ENCODE measurements at regions of chr19 and their contacts with region 1.

Region 1: DNA sequence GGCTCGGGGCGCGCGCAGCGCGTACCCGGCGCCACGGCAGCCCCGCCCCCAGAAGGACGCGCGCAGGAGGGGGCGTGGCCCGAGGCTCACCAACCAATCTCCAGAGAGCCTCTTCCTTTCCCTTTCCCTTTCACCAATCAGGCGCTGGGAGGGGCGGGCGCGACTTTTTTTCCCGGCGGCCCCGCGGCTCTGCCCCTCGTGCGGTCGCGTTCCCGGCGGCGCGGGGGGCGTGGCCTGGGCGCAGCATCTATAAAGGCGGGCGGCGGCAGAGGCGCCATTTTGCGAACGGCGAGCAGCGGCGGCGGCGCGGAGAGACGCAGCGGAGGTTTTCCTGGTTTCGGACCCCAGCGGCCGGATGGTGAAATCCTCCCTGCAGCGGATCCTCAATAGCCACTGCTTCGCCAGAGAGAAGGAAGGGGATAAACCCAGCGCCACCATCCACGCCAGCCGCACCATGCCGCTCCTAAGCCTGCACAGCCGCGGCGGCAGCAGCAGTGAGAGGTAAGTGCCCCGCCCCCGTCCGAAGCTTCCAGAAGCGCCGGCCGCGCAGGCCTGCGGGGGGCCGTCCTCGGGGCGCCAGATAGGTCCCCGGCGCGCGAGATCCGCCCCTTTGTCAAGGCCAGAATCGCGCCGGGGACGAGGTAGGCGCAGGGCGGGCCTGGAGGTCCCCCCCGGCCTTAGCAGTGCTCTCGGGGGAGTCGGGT is 12.6 kb downstream of the PEAK3 start:
- DNase-seq: peak; percentile 75 to 100
- H3K4me3 ChIP-seq: peak overlapping the region; percentile 87 to 100 (median 94)
- H3K27ac ChIP-seq: peak overlapping the region; percentile 76
- H3K4me1 ChIP-seq: peaks cover 0 to 20% (median 7%) of the 10 kb centered on the region in 4 experiments; a peak in 5 of 7 replicates
- H3K27me3 ChIP-seq: no peaks in the 10 kb centered on the region
- CTCF ChIP-seq: no peak
- EP300 ChIP-seq: no peak
- POLR2A ChIP-seq: peak; percentile 99
- RAD21 ChIP-seq: no peak

Region 2: DNA sequence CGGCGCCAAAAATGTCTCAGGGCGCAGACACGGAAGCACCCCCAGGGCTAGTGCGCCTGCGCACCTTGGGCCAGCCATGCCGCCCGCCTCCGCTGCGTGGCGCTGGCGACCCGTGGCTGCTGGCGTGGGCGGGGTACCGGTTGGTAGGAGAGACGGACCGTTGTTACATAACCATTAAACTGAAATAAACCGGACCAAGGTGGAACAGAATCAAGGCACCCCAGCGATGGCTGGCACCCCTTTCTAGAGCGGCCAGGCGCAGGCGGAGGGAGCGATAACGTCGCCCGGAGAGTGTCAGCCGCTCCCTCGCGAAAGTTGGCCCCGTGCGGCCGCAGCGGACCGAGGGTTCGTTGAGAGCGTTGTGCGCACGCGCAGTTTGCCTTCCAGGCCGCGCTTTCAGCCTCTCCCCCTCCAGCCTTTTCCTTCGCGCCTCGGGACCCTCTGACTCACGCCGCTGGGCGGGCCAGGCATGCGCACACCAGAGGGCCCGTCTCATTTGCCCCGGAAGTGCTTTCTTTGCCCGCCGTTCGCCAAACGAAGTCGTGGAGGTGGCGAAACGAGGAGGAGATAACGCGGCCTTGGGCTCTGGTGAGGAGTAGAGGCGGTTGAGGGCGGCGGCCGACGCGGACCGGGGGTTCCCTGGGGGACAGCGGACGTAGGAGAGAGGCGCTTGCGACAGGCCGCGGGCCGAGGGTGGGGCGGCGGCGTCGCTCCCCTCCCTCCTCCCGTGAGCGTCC is 32.9 kb before region 1 on chr19 and contains the starts of genes PLEKHJ1 and SF3A2:
- CTCF ChIA-PET with region 1: interaction called, 18 read pairs
- POLR2A ChIA-PET with region 1: interaction called, 206 read pairs
- DNase-seq: peak; percentile 87 to 99
- H3K4me3 ChIP-seq: peak within 1 kb of the TSS; percentile 77 to 86 (median 80)
- H3K27ac ChIP-seq: peak within 1 kb of the TSS; percentile 93
- H3K4me1 ChIP-seq: peaks cover 0 to 24% (median 14%) of the 10 kb centered on the region in 4 experiments; a peak in 6 of 7 replicates
- H3K27me3 ChIP-seq: no peaks in the 10 kb centered on the region
- CTCF ChIP-seq: peak; percentile 93 to 100 (median 97)
- EP300 ChIP-seq: no peak
- POLR2A ChIP-seq: peak; percentile 77 to 90
- RAD21 ChIP-seq: peak; percentile 86 to 91
- total RNA-seq, gene PLEKHJ1: 135 TPM in 2 replicates
- total RNA-seq, gene SF3A2: 142 and 146 TPM in 2 replicates

Region 3: GRCh38 chr19:2280633-2281264 is 11.4 kb after region 1 on chr19:
- CTCF ChIA-PET with region 1: interaction called, 46 read pairs
- POLR2A ChIA-PET with region 1: interaction called, 14 read pairs
- DNase-seq: no peak
- H3K4me3 ChIP-seq: no peak overlapping the region
- H3K27ac ChIP-seq: no peak overlapping the region
- H3K4me1 ChIP-seq: peaks cover 0 to 5% (median 0%) of the 10 kb centered on the region in 4 experiments; a peak in 2 of 7 replicates
- H3K27me3 ChIP-seq: peaks cover 0 to 17% (median 14%) of the 10 kb centered on the region in 4 experiments; a peak in 6 of 7 replicates
- CTCF ChIP-seq: no peak
- EP300 ChIP-seq: no peak
- POLR2A ChIP-seq: no peak
- RAD21 ChIP-seq: no peak

Region 4: GRCh38 chr19:2302319-2303210 is 33.2 kb after region 1 on chr19:
- CTCF ChIA-PET with region 1: interaction called, 11 read pairs
- POLR2A ChIA-PET with region 1: interaction called, 10 read pairs
- DNase-seq: peak in 1 of 2 experiments; percentile 79
- H3K4me3 ChIP-seq: peak overlapping the region in 3 of 4 experiments; percentile 29 to 54 (median 32); a peak in 5 of 8 replicates
- H3K27ac ChIP-seq: no peak overlapping the region
- H3K4me1 ChIP-seq: peaks cover 0 to 12% (median 8%) of the 10 kb centered on the region in 4 experiments; a peak in 5 of 7 replicates
- H3K27me3 ChIP-seq: peaks cover 0 to 30% (median 19%) of the 10 kb centered on the region in 4 experiments; a peak in 6 of 7 replicates
- CTCF ChIP-seq: no peak
- EP300 ChIP-seq: no peak
- POLR2A ChIP-seq: no peak
- RAD21 ChIP-seq: no peak

Region 5: DNA sequence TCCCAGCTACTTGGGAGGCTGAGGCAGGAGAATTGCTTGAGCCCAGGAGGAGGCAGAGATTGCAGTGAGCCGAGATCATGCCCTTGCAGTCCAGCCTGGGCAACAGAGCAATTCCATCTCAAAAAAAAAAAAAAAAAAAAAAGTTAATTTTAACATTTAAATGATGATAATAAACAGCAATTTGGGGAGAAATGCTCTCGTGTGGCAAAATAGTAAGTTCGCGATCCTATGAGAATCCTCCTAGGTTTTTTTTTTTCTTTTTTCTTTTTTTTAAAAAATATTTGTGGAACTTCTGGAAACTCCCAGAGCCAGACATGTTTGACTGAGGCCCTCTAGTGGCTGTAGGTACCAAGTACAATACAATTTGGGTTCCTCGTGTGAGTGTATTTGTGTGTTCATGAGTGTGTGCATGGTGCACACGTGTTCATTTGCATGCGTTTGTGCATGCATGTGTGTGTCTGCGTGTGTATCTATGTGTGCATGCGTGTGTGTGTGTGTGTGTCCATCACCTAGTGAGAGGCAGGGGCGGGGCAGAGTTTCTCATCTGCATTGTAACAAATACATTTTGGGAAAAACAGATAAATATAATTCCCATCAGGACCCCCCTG is 121.8 kb after region 1 on chr19:
- CTCF ChIA-PET with region 1: interaction called, 18 read pairs
- POLR2A ChIA-PET with region 1: interaction called, 6 read pairs
- DNase-seq: no peak
- H3K4me3 ChIP-seq: no peak overlapping the region
- H3K27ac ChIP-seq: no peak overlapping the region
- H3K4me1 ChIP-seq: no peaks in the 10 kb centered on the region
- H3K27me3 ChIP-seq: no peaks in the 10 kb centered on the region; a peak in 1 of 7 replicates
- CTCF ChIP-seq: peak in 2 of 3 experiments; percentile 62 to 74; a peak in 3 of 4 replicates
- EP300 ChIP-seq: no peak
- POLR2A ChIP-seq: no peak
- RAD21 ChIP-seq: peak; percentile 72 to 80

Measured in H1 (cell line).